ENCODE measurements at regions of chr22 and their contacts with region 1.

Region 1: DNA sequence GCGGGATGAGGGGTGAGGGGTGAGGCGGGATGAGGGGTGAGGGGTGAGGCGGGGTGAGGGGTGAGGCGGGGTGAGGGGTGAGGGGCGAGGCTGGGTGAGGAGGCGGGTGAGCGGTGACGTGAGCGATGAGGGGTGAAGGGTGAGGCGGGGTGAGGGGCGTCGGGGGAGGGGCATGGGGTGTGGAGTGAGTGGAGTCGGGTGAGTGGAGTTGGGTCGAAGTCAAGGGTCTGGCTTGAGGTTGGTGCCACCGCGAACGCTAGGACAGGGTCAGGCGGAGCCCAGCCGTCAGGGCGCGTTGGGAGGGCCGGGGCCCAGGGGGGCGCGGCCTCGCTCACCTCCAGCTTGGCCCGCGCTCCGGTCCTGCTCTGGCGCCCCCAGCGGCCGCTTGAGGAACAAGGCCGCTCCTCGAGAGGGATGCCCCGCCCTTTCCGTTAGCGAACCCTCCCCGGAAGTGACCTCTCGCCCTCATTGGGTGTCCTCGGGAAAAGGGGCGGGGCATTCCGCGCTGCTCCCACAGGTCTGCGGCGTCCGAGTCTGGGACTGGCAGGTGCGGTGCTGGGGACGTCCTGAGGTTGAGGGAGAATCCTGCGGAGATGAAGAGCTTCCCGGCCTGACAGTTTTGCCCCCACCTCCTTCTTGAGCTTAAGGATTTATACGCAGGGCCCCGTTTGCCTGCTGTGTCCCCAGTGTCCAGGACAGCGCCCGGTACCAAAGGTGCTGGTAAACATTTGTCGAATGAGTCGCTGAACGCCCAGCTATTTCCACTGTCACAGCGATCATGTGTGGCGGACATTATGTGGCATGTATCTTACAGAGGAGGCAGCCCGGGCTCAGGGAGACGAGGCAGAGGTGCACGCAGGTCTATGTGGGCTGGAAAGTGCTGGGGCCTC is at the start of gene SYCE3:
- H3K4me3 Mint-ChIP-seq: peak within 1 kb of the TSS; percentile 86
- H3K27ac Mint-ChIP-seq: peak within 1 kb of the TSS; percentile 69
- H3K4me1 Mint-ChIP-seq: peaks cover 17% of the 10 kb centered on the region
- H3K27me3 Mint-ChIP-seq: peaks cover 16% of the 10 kb centered on the region

Region 2: GRCh38 chr22:50507991-50508884 is 54.5 kb before region 1 on chr22 and contains the start of gene NCAPH2:
- intact Hi-C with region 1: loop called (anchors 2 kb)
- H3K4me3 Mint-ChIP-seq: peak within 1 kb of the TSS; percentile 98
- H3K27ac Mint-ChIP-seq: peak within 1 kb of the TSS; percentile 96
- H3K4me1 Mint-ChIP-seq: peaks cover 35% of the 10 kb centered on the region
- H3K27me3 Mint-ChIP-seq: no peaks in the 10 kb centered on the region

Region 3: DNA sequence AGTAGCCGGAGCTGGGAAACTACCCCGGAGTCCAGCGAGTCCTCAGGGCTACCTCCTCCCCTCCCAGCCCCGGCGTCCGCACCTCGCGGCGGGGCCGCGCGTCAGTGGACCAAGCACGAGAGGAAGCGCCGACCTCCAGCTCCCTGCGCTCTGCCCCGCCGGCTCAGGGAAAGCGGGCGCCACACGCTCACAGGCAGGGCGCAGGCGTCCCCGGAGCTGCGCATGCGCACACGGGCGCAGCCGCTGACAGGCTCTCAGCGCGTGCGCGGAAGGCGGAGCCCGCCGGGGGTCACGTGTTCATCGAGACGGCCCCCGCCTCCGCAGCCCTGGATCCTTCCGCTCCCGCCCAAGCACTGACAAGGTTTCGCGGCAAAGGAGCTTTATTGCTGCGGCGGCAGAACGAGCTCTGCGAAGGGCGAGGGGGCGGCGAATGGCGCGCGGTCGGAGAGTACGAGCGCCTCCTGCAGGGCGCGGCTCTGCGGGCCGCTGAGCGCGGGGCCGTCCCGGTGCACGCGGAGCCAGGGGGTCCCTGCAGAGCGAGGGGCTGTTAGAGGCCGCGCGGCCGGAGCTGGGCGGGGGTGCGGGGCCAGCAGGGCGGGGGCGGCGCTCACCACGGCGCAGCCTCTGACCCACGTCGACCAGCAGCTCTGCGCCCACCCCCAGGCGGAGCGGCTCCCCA is 37.2 kb before region 1 on chr22 and contains the start of gene SCO2:
- intact Hi-C with region 1: loop called (anchors 1 kb)
- H3K4me3 Mint-ChIP-seq: peak within 1 kb of the TSS; percentile 97
- H3K27ac Mint-ChIP-seq: peak within 1 kb of the TSS; percentile 95
- H3K4me1 Mint-ChIP-seq: peaks cover 52% of the 10 kb centered on the region
- H3K27me3 Mint-ChIP-seq: no peaks in the 10 kb centered on the region

Region 4: GRCh38 chr22:50599786-50600455 is 37.2 kb after region 1 on chr22:
- intact Hi-C with region 1: no loop called
- H3K4me3 Mint-ChIP-seq: peak overlapping the region; percentile 18
- H3K27ac Mint-ChIP-seq: no peak overlapping the region
- H3K4me1 Mint-ChIP-seq: peaks cover 5% of the 10 kb centered on the region
- H3K27me3 Mint-ChIP-seq: peaks cover 68% of the 10 kb centered on the region

Measured in dendritic cell treated with granulocyte-macrophage colony-stimulating factor and Interleukin-4, amounts not matched to agents 40 ng/mL and 50 ng/mL, for 4 days (primary cell).